Activated CD4-positive, alpha-beta memory T cell treated with anti-CD3 and anti-CD28 coated beads for 36 hours (primary cell): ENCODE measurements at regions of chr7 and their contacts with region 1.

Region 1: DNA sequence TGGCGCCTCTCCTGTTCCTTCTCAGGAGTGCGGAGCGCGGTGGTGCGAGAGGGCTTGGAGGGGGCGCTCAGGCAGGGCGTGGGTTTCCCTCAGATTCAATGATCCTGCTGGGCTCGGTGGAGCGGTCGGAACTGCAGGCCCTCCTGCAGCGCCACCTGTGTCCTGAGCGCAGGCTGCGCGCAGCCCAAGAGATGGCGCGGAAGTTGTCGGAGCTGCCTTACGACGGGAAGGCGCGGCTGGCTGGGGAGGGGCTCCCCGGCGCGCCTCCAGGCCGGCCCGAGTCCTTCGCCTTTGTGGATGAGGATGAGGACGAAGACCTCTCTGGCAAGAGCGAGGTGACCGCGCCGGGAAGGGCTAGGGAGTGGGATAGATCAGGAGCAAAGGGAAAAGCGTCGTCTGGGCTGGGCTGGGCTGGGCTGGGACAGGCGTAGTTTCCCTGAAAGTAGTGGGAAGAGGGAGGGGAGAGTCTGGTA is 17.0 kb downstream of the FAM131B start:
- DNase-seq: peak; percentile 81
- H3K4me3 Mint-ChIP-seq: peak overlapping the region; percentile 65
- H3K27ac Mint-ChIP-seq: no peak overlapping the region
- H3K4me1 Mint-ChIP-seq: peaks cover 15% of the 10 kb centered on the region
- H3K27me3 Mint-ChIP-seq: no peaks in the 10 kb centered on the region

Region 2: DNA sequence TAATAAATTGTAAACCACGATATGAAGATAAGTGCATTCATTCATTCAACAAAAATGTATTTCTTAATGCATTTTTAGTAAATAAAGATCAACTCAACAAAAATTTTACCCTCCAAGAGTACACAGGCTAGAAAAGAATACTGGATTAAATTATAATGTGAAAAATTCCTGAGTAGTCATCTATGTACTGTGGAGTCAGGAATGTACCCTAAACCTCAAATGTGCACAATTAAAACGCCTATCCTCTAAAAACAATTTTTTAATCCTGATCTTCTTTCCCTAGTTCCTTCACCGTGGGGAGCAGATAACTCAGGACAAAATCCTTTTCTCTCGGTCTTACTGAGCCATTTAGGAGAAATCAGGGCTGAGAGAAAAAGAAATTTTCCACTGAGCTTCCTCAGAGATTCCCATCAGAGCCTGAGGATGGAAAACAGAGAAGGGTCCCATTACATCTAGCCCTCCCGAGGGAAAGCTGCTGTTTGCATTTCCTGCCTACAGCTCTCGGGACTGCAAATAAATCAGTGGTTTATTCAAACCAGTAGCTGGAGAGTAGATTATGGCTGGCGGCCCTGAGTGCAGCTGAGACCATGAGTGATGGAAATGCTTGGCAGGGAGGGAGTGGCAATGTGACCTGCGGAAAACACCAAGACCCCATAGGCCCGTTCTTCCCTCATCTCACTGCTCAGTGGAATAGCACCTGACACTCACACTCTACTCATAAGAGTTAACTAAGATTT is 116.2 kb before region 1 on chr7:
- CTCF ChIA-PET with region 1: no interaction called
- POLR2A ChIA-PET with region 1: no interaction called
- intact Hi-C with region 1: no loop called
- DNase-seq: no peak
- H3K4me3 Mint-ChIP-seq: no peak overlapping the region
- H3K27ac Mint-ChIP-seq: no peak overlapping the region
- H3K4me1 Mint-ChIP-seq: no peaks in the 10 kb centered on the region
- H3K27me3 Mint-ChIP-seq: no peaks in the 10 kb centered on the region

Region 3: GRCh38 chr7:143305423-143306070 is 39.9 kb before region 1 on chr7:
- CTCF ChIA-PET with region 1: interaction called, 15 read pairs
- POLR2A ChIA-PET with region 1: no interaction called
- intact Hi-C with region 1: no loop called
- DNase-seq: peak; percentile 82
- H3K4me3 Mint-ChIP-seq: no peak overlapping the region
- H3K27ac Mint-ChIP-seq: peak overlapping the region; percentile 64
- H3K4me1 Mint-ChIP-seq: peaks cover 49% of the 10 kb centered on the region
- H3K27me3 Mint-ChIP-seq: no peaks in the 10 kb centered on the region

Region 4: GRCh38 chr7:143334244-143334643 is 11.2 kb before region 1 on chr7:
- CTCF ChIA-PET with region 1: interaction called, 20 read pairs
- POLR2A ChIA-PET with region 1: no interaction called
- intact Hi-C with region 1: no loop called
- DNase-seq: no peak
- H3K4me3 Mint-ChIP-seq: no peak overlapping the region
- H3K27ac Mint-ChIP-seq: no peak overlapping the region
- H3K4me1 Mint-ChIP-seq: no peaks in the 10 kb centered on the region
- H3K27me3 Mint-ChIP-seq: peaks cover 7% of the 10 kb centered on the region

Region 5: DNA sequence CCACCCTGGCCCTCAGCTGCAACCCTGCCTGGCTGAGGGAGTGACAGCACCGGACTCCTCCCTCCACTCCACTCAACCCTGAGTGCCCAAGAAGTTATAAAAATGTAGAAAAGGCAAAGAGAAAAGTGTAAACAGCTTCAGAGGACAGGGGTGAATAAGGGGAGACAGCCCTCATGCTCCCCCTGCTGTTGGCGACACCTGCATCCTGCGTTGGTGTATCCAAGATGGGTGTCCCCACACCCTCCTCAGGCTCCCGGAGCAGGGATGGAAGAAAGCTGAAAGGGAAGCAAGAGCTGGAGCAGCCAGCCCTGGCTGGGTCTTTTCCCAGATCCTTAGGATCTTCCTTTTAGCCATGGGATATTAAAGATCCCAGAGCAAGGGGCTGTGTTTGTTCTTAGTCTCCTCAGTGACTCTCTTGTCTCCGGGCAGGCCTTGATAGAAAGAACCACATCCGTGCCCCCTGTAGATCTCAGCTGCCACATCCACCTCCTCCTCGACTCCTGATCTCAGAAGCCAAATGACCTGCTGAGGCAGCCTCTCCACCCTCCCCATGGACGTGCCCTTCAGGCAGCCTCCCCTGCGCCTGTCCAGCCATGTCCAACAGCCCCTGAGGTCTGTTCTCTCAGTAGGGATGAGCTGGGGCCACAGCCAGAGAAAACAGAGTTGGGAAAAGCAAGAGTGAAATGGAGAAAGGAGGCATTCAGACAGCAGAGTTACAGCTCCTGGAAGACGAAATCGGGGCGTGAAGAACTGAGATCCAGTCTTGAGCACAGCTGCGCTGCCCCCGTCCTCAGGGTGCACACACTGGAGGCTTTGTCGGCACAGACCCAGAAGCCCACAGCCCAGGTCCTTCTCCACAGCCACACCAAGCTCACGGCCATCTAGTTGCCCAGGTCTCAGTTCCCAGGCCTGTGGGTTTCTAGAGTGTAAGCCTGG is 10.3 kb after region 1 on chr7:
- CTCF ChIA-PET with region 1: interaction called, 11 read pairs
- POLR2A ChIA-PET with region 1: no interaction called
- intact Hi-C with region 1: no loop called
- DNase-seq: no peak
- H3K4me3 Mint-ChIP-seq: no peak overlapping the region
- H3K27ac Mint-ChIP-seq: no peak overlapping the region
- H3K4me1 Mint-ChIP-seq: no peaks in the 10 kb centered on the region
- H3K27me3 Mint-ChIP-seq: peaks cover 3% of the 10 kb centered on the region

Region 6: DNA sequence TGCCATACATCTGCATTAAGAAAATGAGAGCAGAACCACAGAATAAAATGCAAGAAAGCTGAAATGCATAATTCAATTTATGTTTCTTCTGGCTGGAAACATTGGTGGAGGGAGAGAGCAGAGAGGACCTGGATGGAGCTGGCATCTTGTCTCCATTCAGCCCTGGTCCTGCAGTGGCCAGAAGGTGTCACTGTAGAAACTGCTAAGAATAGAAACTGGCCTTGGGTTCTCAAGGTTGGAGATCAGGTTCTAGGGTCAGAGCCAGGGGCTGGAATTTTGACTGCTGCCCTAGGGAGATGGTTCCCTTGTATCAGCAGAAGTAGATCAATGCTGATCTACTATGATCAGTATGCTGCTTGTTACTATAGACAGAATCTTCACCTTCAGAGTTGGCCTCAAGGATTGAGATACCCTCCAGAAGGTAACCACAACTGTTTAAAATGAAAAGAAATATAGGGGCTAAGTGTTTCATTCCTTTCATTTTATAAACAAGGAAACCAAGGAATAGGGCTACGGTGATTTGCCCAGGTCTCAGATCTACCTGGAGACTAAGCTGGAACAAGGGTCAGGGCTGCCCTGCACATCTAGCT is 145.3 kb after region 1 on chr7:
- CTCF ChIA-PET with region 1: no interaction called
- POLR2A ChIA-PET with region 1: no interaction called
- intact Hi-C with region 1: no loop called
- DNase-seq: peak; percentile 40
- H3K4me3 Mint-ChIP-seq: no peak overlapping the region
- H3K27ac Mint-ChIP-seq: no peak overlapping the region
- H3K4me1 Mint-ChIP-seq: peaks cover 26% of the 10 kb centered on the region
- H3K27me3 Mint-ChIP-seq: no peaks in the 10 kb centered on the region